ENCODE measurements at regions of chr5 and their contacts with region 1.

Region 1: DNA sequence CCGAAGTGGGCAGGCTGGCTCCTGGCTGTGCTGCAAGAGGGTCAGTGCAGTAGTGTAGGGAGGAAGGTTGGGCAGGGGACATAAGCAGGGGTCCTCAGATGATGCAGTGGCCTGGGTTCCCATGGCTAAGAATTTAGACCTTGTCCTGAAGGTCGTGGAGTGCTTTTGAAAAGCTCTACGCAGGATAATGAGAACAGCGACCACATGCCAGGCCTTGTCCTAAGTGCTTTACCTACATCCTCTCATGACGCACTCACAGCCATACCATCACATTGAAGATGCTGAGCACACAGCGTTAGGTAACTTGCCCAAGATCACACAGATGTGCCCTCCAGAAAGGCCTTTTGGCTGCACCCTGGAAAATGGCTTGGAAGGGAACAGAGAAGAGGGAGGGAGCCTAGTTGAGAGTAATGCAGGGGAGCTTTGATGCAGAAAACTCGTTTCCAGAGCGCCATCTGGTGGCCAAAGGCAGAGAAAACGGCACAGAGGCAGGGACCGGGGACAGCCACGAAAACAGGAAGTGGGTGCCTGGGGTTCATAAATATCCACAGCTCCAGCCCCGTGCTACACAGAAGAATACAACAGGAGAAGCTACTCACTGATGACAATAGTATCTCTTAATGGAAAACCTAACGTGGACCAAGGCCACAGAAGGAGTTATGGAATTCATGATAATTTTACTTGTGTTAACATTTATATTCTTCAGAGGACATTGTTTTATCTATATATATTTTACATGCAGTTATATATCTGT is 2.6 kb upstream of the PCDH12 start:
- DNase-seq: peak; percentile 94
- ATAC-seq: peak; percentile 88
- H3K4me3 Mint-ChIP-seq: peak overlapping the region; percentile 44
- H3K27ac Mint-ChIP-seq: peak overlapping the region; percentile 80
- H3K4me1 Mint-ChIP-seq: peaks cover 45% of the 10 kb centered on the region
- H3K27me3 Mint-ChIP-seq: no peaks in the 10 kb centered on the region
- CTCF ChIP-seq: peak; percentile 62

Region 2: GRCh38 chr5:141691867-141692532 is 268.6 kb before region 1 on chr5:
- CTCF ChIA-PET with region 1: interaction called, 204 read pairs
- POLR2A ChIA-PET with region 1: interaction called, 8 read pairs
- intact Hi-C with region 1: loop called (anchors 2 kb)
- DNase-seq: peak; percentile 90
- ATAC-seq: peak; percentile 81
- H3K4me3 Mint-ChIP-seq: peak overlapping the region; percentile 68
- H3K27ac Mint-ChIP-seq: peak overlapping the region; percentile 46
- H3K4me1 Mint-ChIP-seq: peaks cover 19% of the 10 kb centered on the region
- H3K27me3 Mint-ChIP-seq: peaks cover 9% of the 10 kb centered on the region
- CTCF ChIP-seq: peak; percentile 92

Region 3: GRCh38 chr5:141846031-141846430 is 114.6 kb before region 1 on chr5:
- CTCF ChIA-PET with region 1: interaction called, 13 read pairs
- POLR2A ChIA-PET with region 1: no interaction called
- intact Hi-C with region 1: no loop called
- DNase-seq: peak; percentile 53
- ATAC-seq: no peak
- H3K4me3 Mint-ChIP-seq: no peak overlapping the region
- H3K27ac Mint-ChIP-seq: no peak overlapping the region
- H3K4me1 Mint-ChIP-seq: peaks cover 32% of the 10 kb centered on the region
- H3K27me3 Mint-ChIP-seq: peaks cover 1% of the 10 kb centered on the region
- CTCF ChIP-seq: no peak

Region 4: DNA sequence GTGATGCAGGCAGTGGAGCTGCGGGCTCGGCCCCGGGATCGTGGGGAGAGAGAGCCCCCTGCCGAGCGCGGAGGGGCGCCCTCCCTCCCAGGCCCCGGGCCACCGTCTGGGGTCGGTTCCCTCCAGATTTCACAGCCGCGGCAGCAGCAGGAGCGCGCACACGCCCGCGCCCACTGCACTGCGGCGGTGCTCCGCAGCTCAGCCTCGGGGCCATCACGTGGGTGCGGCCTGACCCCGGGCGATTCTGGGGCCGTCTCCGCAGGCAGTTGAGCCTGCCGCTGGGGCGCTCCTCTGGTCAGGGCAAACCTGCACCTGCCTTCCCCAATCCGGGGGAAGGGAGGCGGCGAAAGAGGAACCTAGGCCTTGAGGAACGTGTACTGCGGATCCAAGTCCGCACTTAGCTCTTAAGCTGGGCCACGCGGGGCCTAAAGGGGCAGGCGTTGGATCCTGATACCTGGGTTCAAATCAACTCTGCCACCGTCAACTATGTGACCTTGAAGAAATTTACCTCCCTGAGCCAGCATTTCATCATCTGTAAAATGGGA is 46.4 kb before region 1 on chr5:
- CTCF ChIA-PET with region 1: interaction called, 29 read pairs
- POLR2A ChIA-PET with region 1: interaction called, 3 read pairs
- intact Hi-C with region 1: no loop called
- DNase-seq: peak; percentile 36
- ATAC-seq: peak; percentile 81
- H3K4me3 Mint-ChIP-seq: peak overlapping the region; percentile 29
- H3K27ac Mint-ChIP-seq: no peak overlapping the region
- H3K4me1 Mint-ChIP-seq: peaks cover 11% of the 10 kb centered on the region
- H3K27me3 Mint-ChIP-seq: peaks cover 21% of the 10 kb centered on the region
- CTCF ChIP-seq: peak; percentile 1

Region 5: GRCh38 chr5:141940695-141941271 is 19.8 kb before region 1 on chr5:
- CTCF ChIA-PET with region 1: interaction called, 92 read pairs
- POLR2A ChIA-PET with region 1: interaction called, 9 read pairs
- intact Hi-C with region 1: no loop called
- DNase-seq: no peak
- ATAC-seq: peak; percentile 20
- H3K4me3 Mint-ChIP-seq: no peak overlapping the region
- H3K27ac Mint-ChIP-seq: peak overlapping the region; percentile 64
- H3K4me1 Mint-ChIP-seq: peaks cover 2% of the 10 kb centered on the region
- H3K27me3 Mint-ChIP-seq: no peaks in the 10 kb centered on the region
- CTCF ChIP-seq: no peak